Activated CD4-positive, alpha-beta T cell treated with anti-CD3 and anti-CD28 coated beads for 36 hours (primary cell): ENCODE measurements at regions of chrX and their contacts with region 1.

Region 1: DNA sequence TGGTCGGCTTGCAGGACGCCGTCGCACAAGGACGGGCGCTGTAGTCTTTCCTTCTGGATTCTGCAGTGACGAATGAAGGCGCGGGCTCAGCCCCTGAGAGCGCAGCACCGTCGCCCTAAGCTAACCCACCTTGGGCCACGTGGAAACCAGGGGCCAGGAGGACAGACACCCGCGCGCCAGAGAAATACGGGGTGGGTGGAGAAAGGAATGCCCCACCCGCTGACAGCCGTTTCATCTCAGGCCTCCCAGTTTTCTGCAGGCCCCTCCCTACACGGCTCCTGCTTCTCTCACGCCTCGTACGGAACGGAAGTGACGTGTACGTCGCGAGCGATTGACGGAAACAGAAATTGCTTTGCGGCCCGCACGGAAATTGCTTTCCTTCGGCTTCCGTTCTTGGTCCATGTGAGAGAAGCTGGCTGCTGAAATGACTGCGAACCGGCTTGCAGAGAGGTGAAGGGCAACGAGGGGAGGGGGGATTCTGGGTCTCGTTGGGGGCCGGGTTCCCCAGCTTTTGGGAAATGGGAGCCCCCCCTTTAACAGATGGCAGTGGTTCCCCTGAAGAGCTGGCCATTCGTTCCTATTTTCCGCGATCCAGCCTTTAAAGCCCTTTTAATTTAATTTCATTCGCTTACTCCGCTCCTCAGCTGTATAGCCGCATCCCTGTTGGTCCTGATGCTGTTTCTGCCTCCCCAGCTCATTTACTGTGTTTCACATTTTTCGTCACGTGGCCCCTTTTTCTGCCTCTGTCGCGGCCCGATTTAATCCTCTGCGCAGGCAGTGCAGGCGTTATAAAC is at the start of gene UTP14A:
- DNase-seq: peak; percentile 90
- ATAC-seq: peak; percentile 97
- H3K4me3 Mint-ChIP-seq: peak within 1 kb of the TSS; percentile 88
- H3K27ac Mint-ChIP-seq: peak within 1 kb of the TSS; percentile 92
- H3K4me1 Mint-ChIP-seq: peaks cover 25% of the 10 kb centered on the region
- H3K27me3 Mint-ChIP-seq: no peaks in the 10 kb centered on the region
- total RNA-seq, gene UTP14A: 35.7 to 45.2 TPM

Region 2: GRCh38 chrX:129606918-129607317 is 299.1 kb before region 1 on chrX:
- CTCF ChIA-PET with region 1: interaction called, 3 read pairs
- POLR2A ChIA-PET with region 1: no interaction called
- intact Hi-C with region 1: loop called (anchors 1 to 10 kb)
- DNase-seq: peak; percentile 59
- ATAC-seq: no peak
- H3K4me3 Mint-ChIP-seq: no peak overlapping the region
- H3K27ac Mint-ChIP-seq: peak overlapping the region; percentile 48
- H3K4me1 Mint-ChIP-seq: peaks cover 11% of the 10 kb centered on the region
- H3K27me3 Mint-ChIP-seq: no peaks in the 10 kb centered on the region

Region 3: GRCh38 chrX:129772796-129773431 is 133.1 kb before region 1 on chrX:
- CTCF ChIA-PET with region 1: no interaction called
- POLR2A ChIA-PET with region 1: no interaction called
- intact Hi-C with region 1: loop called in 1 of 2 experiments (anchors 5 kb)
- DNase-seq: peak; percentile 71
- ATAC-seq: peak; percentile 25
- H3K4me3 Mint-ChIP-seq: peak overlapping the region; percentile 41
- H3K27ac Mint-ChIP-seq: peak overlapping the region; percentile 86
- H3K4me1 Mint-ChIP-seq: peaks cover 74% of the 10 kb centered on the region
- H3K27me3 Mint-ChIP-seq: no peaks in the 10 kb centered on the region

Region 4: DNA sequence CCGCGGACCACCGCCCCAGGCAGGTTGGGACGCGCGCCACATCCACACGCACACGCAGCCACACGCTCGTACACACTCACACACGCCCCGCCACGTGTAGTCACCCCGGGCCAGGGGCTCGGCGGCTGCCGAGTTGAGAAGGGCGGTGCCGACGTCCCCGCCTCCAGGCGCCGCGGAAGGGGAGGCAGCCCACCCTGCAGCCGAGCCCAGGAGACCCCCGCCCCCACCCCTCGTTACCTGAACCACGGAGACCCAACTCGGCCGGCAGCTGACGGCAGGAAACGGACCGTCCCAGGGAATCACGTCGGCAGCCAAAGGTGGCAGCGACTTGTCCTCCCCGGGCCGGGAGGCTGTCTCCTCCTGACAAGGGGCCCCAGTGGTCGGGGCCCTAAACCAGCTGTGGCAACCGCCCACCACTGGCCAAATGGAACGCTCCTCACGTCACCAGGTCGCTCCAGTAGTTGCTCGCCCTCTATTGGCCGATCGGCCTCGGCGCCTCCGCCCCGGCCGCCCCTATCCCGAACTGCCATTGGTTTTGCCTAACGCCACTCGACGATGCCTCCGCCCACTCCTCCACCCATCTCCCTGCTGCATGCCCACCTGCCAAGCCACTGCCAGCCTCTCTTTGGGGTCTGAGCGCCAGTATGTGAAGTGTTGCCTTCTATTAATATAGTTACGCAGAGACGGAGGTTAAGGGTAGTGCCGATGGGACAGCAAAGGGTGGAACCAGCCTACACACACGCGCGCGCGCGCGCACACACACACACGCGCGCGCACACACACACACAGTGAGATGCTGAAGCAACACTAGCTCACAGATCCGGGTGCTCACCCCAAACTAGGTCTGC is 62.3 kb before region 1 on chrX and contains the start of gene ZDHHC9:
- CTCF ChIA-PET with region 1: no interaction called
- POLR2A ChIA-PET with region 1: no interaction called
- intact Hi-C with region 1: loop called in 1 of 2 experiments (anchors 1 kb)
- DNase-seq: peak; percentile 92
- ATAC-seq: peak; percentile 97
- H3K4me3 Mint-ChIP-seq: peak within 1 kb of the TSS; percentile 77
- H3K27ac Mint-ChIP-seq: peak within 1 kb of the TSS; percentile 75
- H3K4me1 Mint-ChIP-seq: peaks cover 32% of the 10 kb centered on the region
- H3K27me3 Mint-ChIP-seq: no peaks in the 10 kb centered on the region
- total RNA-seq, gene ZDHHC9: 12.5 to 14.2 TPM

Region 5: DNA sequence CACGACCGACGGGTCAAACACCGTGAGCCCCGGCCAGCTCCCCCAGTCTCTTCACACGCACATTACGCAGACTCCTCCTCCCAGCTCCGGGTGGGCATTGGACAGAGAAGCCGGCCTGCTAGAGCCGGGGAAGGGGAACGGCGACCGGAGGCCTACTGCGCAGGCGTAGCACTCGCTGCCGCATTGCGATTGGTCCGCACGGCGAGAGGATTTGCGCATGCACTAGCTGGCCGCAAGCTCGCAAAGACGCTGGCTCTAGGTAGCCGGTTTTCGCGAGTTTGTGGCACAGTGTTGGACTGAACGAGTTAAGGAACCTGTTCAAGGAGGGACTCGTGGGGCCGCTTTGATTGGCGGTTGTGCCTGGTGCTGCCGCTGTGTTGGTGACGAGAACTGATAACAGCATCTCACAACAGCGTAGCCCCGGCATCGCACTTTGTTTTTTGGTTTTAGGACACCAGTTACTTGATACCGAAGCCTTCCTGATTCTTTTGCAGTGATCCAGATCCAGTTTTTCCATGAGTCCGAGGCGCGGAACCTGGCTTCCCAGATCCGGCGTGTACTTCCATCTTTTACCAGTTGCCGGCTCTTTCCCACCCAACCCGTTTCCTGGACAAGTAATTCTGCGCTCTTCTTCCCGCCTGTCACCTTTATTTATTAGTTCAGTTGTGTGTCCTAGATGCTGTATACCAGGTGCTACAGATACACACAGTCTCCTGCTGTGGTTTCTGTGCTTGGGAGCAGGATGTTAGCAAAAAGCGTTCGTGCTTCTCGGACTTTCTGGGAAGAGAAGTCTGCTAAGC is 259.9 kb after region 1 on chrX and contains the start of gene AIFM1:
- CTCF ChIA-PET with region 1: no interaction called
- POLR2A ChIA-PET with region 1: no interaction called
- intact Hi-C with region 1: loop called in 1 of 2 experiments (anchors 5 kb)
- DNase-seq: peak; percentile 92
- ATAC-seq: peak; percentile 95
- H3K4me3 Mint-ChIP-seq: peak within 1 kb of the TSS; percentile 86
- H3K27ac Mint-ChIP-seq: peak within 1 kb of the TSS; percentile 89
- H3K4me1 Mint-ChIP-seq: peaks cover 37% of the 10 kb centered on the region
- H3K27me3 Mint-ChIP-seq: no peaks in the 10 kb centered on the region
- total RNA-seq, gene AIFM1: 48.8 to 61.7 TPM

Region 6: GRCh38 chrX:130339408-130340222 is 433.6 kb after region 1 on chrX and contains the start of gene SLC25A14:
- CTCF ChIA-PET with region 1: no interaction called
- POLR2A ChIA-PET with region 1: interaction called, 4 read pairs
- intact Hi-C with region 1: loop called in 1 of 2 experiments (anchors 1 kb)
- DNase-seq: peak; percentile 82
- ATAC-seq: peak; percentile 88
- H3K4me3 Mint-ChIP-seq: peak within 1 kb of the TSS; percentile 87
- H3K27ac Mint-ChIP-seq: peak within 1 kb of the TSS; percentile 94
- H3K4me1 Mint-ChIP-seq: peaks cover 14% of the 10 kb centered on the region
- H3K27me3 Mint-ChIP-seq: no peaks in the 10 kb centered on the region
- total RNA-seq, gene SLC25A14: 9.6 to 11.0 TPM

Region 7: DNA sequence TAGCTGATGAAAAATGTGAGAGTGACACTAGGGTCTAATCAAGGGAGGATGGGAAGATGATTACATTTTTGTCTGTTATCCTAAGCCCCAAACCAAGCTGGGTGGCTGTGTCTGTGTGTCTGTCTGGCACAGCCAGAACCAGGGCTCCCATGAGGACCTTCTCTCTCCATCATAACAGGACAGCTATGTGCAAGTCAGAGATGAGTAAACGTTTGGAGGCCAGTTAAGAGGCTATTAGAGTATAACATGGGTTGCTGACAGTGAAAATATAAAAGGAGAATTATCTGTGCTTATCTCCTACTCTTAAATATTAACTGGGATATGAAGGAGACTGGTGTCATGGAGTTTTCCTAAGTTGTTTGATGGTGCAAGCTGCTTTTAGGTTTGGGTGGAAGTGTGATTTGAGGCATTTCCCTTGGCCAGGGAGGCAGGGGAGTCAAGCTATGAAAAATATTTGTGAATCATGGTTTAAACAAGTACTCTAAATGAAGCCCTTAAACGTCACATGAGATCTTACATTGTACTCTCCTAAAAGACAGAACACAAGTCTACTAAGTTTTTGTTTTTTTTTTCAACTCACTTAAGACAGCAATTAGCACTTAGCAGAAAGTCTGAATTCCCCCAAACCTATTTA is 840.8 kb after region 1 on chrX:
- CTCF ChIA-PET with region 1: no interaction called
- POLR2A ChIA-PET with region 1: no interaction called
- intact Hi-C with region 1: no loop called
- DNase-seq: no peak
- ATAC-seq: no peak
- H3K4me3 Mint-ChIP-seq: no peak overlapping the region
- H3K27ac Mint-ChIP-seq: no peak overlapping the region
- H3K4me1 Mint-ChIP-seq: no peaks in the 10 kb centered on the region
- H3K27me3 Mint-ChIP-seq: no peaks in the 10 kb centered on the region

Region 8: GRCh38 chrX:130902783-130903613 is 997.0 kb after region 1 on chrX and contains the start of gene ENOX2:
- CTCF ChIA-PET with region 1: no interaction called
- POLR2A ChIA-PET with region 1: no interaction called
- intact Hi-C with region 1: loop called in 1 of 2 experiments (anchors 5 kb)
- DNase-seq: peak; percentile 86
- ATAC-seq: peak; percentile 98
- H3K4me3 Mint-ChIP-seq: no peak within 1 kb of the TSS
- H3K27ac Mint-ChIP-seq: peak within 1 kb of the TSS; percentile 80
- H3K4me1 Mint-ChIP-seq: peaks cover 5% of the 10 kb centered on the region
- H3K27me3 Mint-ChIP-seq: peaks cover 2% of the 10 kb centered on the region
- total RNA-seq, gene ENOX2: 12.5 to 16.5 TPM